T-cell (primary cell): ENCODE measurements at regions of chr10 and their contacts with region 1.

Region 1: DNA sequence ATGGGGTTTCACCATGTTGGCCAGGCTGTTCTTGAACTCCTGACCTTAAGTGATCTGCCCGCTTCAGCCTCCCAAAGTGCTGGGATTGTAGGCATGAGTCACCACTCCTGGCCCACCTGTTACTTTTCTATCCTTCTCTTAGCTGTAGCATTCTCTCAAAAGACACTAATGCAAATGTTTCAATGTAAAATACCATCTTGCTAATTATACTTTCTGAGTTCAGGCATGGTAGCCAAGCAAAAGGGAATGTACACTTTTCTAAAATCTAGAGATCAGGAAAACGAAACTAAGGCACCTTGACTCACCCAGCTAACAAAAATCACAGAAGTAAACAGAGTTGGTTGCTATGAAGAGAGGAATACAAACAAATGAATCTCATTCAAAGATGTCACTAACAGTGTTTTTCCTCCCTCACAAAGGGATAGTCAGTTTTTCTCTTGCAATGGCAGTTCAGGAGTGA is 401.0 kb upstream of the NRP1 start:
- DNase-seq: no peak
- ATAC-seq: no peak
- H3K4me3 ChIP-seq: no peak overlapping the region
- H3K4me3 Mint-ChIP-seq: no peak overlapping the region
- H3K27ac ChIP-seq: no peak overlapping the region
- H3K27ac Mint-ChIP-seq: no peak overlapping the region
- H3K4me1 ChIP-seq: no peaks in the 10 kb centered on the region
- H3K4me1 Mint-ChIP-seq: no peaks in the 10 kb centered on the region
- H3K27me3 ChIP-seq: no peaks in the 10 kb centered on the region
- H3K27me3 Mint-ChIP-seq: peaks cover 9 to 24% of the 10 kb centered on the region in 2 donors

Region 2: DNA sequence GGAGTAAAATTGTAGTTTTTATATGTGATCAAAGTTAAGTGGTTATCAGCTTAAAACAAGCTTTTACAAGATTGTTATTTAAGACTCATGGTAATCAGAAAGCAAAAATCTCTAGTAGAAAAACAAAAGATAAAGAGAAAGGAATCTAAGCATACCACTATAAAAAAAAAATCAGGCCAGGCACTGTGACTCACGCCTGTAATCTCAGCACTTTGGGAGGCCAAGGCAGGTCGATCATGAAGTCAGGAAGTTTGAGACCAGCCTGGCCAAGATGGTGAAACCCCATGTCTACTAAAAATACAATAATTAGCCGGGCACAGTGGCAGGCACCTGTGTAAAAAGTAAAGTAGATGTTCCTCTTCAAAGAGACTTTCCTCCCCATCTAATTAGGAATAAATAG is 135.1 kb before region 1 on chr10:
- CTCF ChIA-PET with region 1: interaction called in 1 of 2 experiments, 11 read pairs
- POLR2A ChIA-PET with region 1: no interaction called
- DNase-seq: no peak
- ATAC-seq: no peak
- H3K4me3 ChIP-seq: no peak overlapping the region
- H3K4me3 Mint-ChIP-seq: no peak overlapping the region
- H3K27ac ChIP-seq: no peak overlapping the region
- H3K27ac Mint-ChIP-seq: no peak overlapping the region
- H3K4me1 ChIP-seq: no peaks in the 10 kb centered on the region
- H3K4me1 Mint-ChIP-seq: no peaks in the 10 kb centered on the region
- H3K27me3 ChIP-seq: peaks cover 2 to 5% of the 10 kb centered on the region in 2 experiments
- H3K27me3 Mint-ChIP-seq: peaks cover 18 to 24% of the 10 kb centered on the region in 2 donors